MCF 10A (cell line): ENCODE measurements at regions of chr12 and their contacts with region 1.

Region 1: DNA sequence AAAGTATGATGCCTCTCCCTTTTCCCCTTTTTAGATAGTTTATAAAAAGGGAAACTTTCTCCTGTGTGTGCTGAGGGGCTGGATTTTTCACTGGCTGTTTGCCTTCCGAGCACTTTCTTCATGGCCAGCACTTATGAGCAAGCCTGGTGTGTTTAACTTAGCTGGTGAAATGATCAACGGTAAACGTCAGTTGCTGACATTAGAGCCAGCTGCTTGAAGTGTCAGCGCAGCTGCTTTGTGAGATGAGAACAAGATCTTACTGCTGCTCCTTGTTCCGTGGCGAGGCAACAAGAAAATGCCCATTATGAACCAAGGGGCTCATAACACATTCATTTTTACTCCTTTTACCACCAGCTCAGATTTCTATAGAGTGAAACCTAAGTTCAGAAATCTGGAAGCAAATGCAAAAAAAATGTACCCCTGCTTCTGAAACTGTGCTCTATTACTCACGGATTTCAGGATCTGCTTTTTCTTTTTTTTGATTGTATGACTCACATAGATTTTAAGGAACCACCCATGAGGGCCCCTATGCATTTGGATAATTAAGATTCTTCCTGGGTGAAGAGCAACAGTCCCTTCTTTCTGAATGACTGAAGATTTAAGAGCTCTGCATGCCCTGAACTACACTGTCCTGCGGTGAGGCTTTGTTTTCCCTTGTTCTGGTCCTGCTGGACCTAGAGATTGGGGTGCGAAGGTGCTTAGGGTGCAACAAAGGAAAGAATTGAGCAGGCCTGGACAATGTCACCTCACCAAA is 74.3 kb upstream of the CPM start:
- DNase-seq: peak; percentile 53
- H3K4me3 Mint-ChIP-seq: peak overlapping the region; percentile 39
- H3K27ac Mint-ChIP-seq: peak overlapping the region; percentile 82
- H3K4me1 Mint-ChIP-seq: peaks cover 24% of the 10 kb centered on the region
- H3K27me3 Mint-ChIP-seq: no peaks in the 10 kb centered on the region
- CTCF ChIP-seq: no peak

Region 2: GRCh38 chr12:68981516-68981915 is 25.8 kb before region 1 on chr12:
- CTCF ChIA-PET with region 1: no interaction called
- POLR2A ChIA-PET with region 1: interaction called, 21 read pairs
- intact Hi-C with region 1: no loop called
- DNase-seq: no peak
- H3K4me3 Mint-ChIP-seq: no peak overlapping the region
- H3K27ac Mint-ChIP-seq: peak overlapping the region; percentile 64
- H3K4me1 Mint-ChIP-seq: peaks cover 22% of the 10 kb centered on the region
- H3K27me3 Mint-ChIP-seq: no peaks in the 10 kb centered on the region
- CTCF ChIP-seq: no peak

Region 3: DNA sequence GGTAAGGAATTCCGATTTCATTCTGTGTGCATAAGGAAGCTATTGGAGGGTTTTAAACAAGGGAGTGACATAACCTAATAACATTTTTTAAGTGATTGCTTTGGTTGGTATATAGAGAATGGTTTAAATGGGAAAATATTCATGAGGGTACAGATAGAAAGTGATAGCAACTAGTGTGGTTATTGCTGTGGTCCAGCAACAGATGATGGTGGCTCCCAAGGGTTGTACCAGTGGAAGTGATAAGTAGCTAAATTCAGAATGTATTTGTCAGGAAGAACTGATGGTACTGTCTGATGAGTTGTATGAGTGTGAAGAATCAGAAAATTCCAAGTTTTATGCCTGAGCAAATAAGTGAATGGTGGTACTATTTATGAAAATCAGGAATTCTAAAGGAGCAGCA is 1233.4 kb after region 1 on chr12:
- CTCF ChIA-PET with region 1: no interaction called
- POLR2A ChIA-PET with region 1: no interaction called
- intact Hi-C with region 1: no loop called
- DNase-seq: no peak
- H3K4me3 Mint-ChIP-seq: no peak overlapping the region
- H3K27ac Mint-ChIP-seq: no peak overlapping the region
- H3K4me1 Mint-ChIP-seq: peaks cover 24% of the 10 kb centered on the region
- H3K27me3 Mint-ChIP-seq: no peaks in the 10 kb centered on the region
- CTCF ChIP-seq: no peak